B cell (primary cell): ENCODE measurements at regions of chr9 and their contacts with region 1.

Region 1: DNA sequence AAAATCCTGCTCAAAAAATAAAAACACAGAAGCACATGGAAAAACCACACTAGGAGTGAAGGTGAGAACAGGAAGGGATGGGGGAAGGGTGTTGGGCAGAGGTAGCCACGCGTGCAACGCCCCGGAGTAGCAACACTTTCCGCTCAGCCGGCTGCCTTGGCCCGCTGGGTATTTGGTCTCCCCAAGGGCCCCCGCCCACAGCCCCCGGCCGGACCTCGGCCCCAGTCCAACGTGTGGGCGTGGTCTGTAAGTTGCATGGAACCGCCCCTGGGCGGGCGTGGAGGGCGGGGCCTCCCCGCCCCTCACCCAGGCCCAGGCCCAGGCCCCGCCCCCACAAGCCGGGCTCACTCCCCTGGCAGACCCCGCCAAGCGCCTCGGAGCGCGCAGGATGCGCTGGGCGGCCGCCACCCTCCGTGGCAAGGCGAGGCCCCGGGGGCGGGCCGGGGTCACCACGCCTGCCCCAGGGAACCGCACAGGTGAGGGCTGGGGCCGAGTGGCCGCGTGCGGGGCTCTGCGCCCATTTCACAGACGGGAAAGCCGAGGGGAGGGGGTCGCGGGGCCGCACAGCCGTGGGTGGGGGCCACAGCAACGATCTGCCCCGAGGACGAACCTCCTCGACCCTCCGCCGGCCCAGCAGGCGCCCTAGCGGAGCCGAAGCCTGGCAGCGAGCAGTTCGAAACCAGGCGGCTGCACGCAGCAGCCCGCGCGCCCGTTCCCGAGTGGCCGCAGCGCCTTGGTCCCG is at the start of gene SUSD3:
- DNase-seq: peak; percentile 83
- ATAC-seq: peak; percentile 75
- H3K4me3 ChIP-seq: peak within 1 kb of the TSS; percentile 56 to 69 (median 67)
- H3K4me3 Mint-ChIP-seq: peak within 1 kb of the TSS; percentile 90
- H3K27ac ChIP-seq: peak within 1 kb of the TSS; percentile 79 to 80
- H3K27ac Mint-ChIP-seq: peak within 1 kb of the TSS; percentile 99
- H3K4me1 ChIP-seq: peaks cover 50 to 60% of the 10 kb centered on the region in 2 donors
- H3K4me1 Mint-ChIP-seq: peaks cover 66% of the 10 kb centered on the region
- H3K27me3 ChIP-seq: no peaks in the 10 kb centered on the region
- H3K27me3 Mint-ChIP-seq: no peaks in the 10 kb centered on the region
- CTCF ChIP-seq: no peak
- total RNA-seq, gene SUSD3: 38.3 and 41.0 TPM in 2 replicates

Region 2: DNA sequence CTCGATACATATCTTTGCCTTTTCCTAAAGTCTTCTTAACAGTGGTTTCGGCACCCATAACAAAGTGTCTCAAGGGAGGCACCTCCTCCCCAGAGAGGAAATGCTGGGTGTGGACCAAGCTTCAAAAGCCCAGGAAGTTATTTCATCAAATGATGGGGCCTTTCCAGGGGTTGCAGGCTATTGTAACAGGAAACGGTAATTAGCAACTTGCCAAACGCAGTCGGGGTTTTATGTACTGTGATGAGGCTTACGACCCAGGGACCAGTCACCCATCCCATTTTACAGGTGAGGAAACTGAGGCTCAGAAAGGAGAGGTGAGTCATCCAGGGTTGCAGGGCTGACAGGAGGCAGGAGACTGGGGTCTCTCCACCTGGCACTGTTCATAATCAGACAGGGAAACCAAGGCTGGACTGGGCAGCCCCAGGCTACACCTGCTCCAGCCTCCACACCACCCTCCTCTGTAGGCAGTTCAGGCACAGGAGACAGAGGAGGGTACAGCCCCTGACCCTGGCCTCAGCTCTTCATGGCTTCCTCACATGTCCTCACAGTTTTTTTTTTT is 30.0 kb before region 1 on chr9:
- CTCF ChIA-PET with region 1: interaction called, 6 read pairs
- POLR2A ChIA-PET with region 1: interaction called, 27 read pairs
- intact Hi-C with region 1: loop called (anchors 1 kb)
- DNase-seq: peak; percentile 81
- ATAC-seq: peak; percentile 91
- H3K4me3 ChIP-seq: peak overlapping the region in 4 of 5 experiments; percentile 4 to 38 (median 22)
- H3K4me3 Mint-ChIP-seq: peak overlapping the region; percentile 85
- H3K27ac ChIP-seq: peak overlapping the region; percentile 70 to 72
- H3K27ac Mint-ChIP-seq: peak overlapping the region; percentile 95
- H3K4me1 ChIP-seq: peaks cover 33 to 49% of the 10 kb centered on the region in 2 donors
- H3K4me1 Mint-ChIP-seq: peaks cover 61% of the 10 kb centered on the region
- H3K27me3 ChIP-seq: no peaks in the 10 kb centered on the region
- H3K27me3 Mint-ChIP-seq: no peaks in the 10 kb centered on the region
- CTCF ChIP-seq: no peak

Region 3: GRCh38 chr9:93043122-93043521 is 15.4 kb before region 1 on chr9:
- CTCF ChIA-PET with region 1: interaction called, 3 read pairs
- POLR2A ChIA-PET with region 1: interaction called, 10 read pairs
- intact Hi-C with region 1: loop called (anchors 2 kb)
- DNase-seq: peak; percentile 78
- ATAC-seq: peak; percentile 86
- H3K4me3 ChIP-seq: no peak overlapping the region
- H3K4me3 Mint-ChIP-seq: peak overlapping the region; percentile 3
- H3K27ac ChIP-seq: peak overlapping the region in 1 of 2 donors; percentile 22
- H3K27ac Mint-ChIP-seq: peak overlapping the region; percentile 53
- H3K4me1 ChIP-seq: peaks cover 15 to 24% of the 10 kb centered on the region in 2 donors
- H3K4me1 Mint-ChIP-seq: peaks cover 31% of the 10 kb centered on the region
- H3K27me3 ChIP-seq: no peaks in the 10 kb centered on the region
- H3K27me3 Mint-ChIP-seq: no peaks in the 10 kb centered on the region
- CTCF ChIP-seq: no peak

Region 4: DNA sequence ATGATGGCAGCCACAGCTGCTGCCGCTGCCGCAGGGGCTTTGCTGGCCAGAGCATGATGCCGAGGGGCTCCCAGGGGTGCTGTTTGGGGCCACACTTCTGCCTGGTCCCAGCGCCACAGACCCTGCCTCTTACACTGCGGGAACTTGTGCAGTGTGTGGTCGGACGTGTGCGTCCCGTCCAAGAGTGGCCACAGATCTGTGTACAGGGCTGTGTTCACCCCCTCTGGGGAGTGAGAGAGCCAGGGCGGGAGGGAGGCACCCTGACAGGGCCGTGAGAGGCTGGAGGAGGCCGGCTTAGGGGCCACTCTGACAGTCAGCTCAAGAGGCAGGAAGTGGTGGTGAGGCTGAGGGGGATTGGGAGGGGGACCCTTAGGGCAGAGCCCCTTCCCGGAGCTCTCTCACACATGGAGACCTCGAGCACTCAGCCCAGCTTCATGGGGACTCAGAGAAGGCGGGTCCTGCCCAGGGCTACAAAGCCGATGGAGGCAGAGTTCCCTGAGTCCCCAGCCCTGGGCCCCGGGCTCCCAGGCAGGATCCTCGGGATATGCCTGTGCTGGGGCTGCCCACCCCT is 24.4 kb after region 1 on chr9:
- CTCF ChIA-PET with region 1: no interaction called
- POLR2A ChIA-PET with region 1: no interaction called
- intact Hi-C with region 1: no loop called
- DNase-seq: no peak
- ATAC-seq: no peak
- H3K4me3 ChIP-seq: no peak overlapping the region
- H3K4me3 Mint-ChIP-seq: no peak overlapping the region
- H3K27ac ChIP-seq: no peak overlapping the region
- H3K27ac Mint-ChIP-seq: no peak overlapping the region
- H3K4me1 ChIP-seq: no peaks in the 10 kb centered on the region
- H3K4me1 Mint-ChIP-seq: no peaks in the 10 kb centered on the region
- H3K27me3 ChIP-seq: no peaks in the 10 kb centered on the region
- H3K27me3 Mint-ChIP-seq: no peaks in the 10 kb centered on the region
- CTCF ChIP-seq: no peak

Region 5: DNA sequence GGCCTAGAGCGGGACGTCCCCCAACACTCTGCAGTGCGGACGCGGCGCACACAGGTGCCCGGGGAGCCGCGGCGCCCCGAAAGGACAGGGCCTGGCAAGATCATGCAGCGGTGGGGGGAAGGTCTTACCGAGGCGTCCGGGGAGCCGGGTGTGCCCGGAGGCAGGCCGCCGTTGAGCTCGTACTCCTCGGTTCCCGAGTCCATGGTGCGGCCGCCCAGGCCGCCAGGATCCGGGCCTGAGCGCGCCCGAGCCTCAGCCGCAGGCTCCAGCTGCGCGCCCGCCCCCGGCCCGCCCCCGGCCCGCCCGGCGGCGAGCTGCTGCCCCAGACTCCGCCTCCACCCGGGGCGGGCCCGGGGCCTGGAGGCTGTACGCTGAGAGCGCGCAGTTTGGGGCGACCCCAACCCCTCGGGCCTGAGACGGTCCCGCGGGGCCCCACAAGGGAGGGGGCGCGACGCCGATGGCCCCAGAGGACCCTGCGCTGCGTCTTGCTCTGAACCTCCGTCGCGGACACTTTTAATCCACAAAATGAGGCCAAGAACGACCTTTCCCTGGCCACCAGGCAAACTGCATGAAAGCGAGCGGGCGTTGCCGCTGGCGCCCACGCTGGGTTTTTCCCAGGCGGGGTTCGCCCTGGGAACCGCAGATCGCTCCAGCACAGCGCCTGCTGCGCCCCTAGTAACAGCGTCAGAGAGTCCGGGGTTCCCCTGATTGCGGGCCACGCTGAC is 75.7 kb after region 1 on chr9 and contains the start of gene NINJ1:
- CTCF ChIA-PET with region 1: no interaction called
- POLR2A ChIA-PET with region 1: no interaction called
- intact Hi-C with region 1: loop called (anchors 1 kb)
- DNase-seq: peak; percentile 94
- ATAC-seq: peak; percentile 85
- H3K4me3 ChIP-seq: peak within 1 kb of the TSS; percentile 16 to 77 (median 67)
- H3K4me3 Mint-ChIP-seq: peak within 1 kb of the TSS; percentile 90
- H3K27ac ChIP-seq: peak within 1 kb of the TSS; percentile 68 to 76
- H3K27ac Mint-ChIP-seq: peak within 1 kb of the TSS; percentile 84
- H3K4me1 ChIP-seq: peaks cover 25 to 33% of the 10 kb centered on the region in 2 donors
- H3K4me1 Mint-ChIP-seq: peaks cover 43% of the 10 kb centered on the region
- H3K27me3 ChIP-seq: peaks cover 0 to 13% (median 0%) of the 10 kb centered on the region in 4 experiments
- H3K27me3 Mint-ChIP-seq: no peaks in the 10 kb centered on the region
- CTCF ChIP-seq: no peak
- total RNA-seq, gene NINJ1: 7.6 and 8.3 TPM in 2 replicates

Region 6: DNA sequence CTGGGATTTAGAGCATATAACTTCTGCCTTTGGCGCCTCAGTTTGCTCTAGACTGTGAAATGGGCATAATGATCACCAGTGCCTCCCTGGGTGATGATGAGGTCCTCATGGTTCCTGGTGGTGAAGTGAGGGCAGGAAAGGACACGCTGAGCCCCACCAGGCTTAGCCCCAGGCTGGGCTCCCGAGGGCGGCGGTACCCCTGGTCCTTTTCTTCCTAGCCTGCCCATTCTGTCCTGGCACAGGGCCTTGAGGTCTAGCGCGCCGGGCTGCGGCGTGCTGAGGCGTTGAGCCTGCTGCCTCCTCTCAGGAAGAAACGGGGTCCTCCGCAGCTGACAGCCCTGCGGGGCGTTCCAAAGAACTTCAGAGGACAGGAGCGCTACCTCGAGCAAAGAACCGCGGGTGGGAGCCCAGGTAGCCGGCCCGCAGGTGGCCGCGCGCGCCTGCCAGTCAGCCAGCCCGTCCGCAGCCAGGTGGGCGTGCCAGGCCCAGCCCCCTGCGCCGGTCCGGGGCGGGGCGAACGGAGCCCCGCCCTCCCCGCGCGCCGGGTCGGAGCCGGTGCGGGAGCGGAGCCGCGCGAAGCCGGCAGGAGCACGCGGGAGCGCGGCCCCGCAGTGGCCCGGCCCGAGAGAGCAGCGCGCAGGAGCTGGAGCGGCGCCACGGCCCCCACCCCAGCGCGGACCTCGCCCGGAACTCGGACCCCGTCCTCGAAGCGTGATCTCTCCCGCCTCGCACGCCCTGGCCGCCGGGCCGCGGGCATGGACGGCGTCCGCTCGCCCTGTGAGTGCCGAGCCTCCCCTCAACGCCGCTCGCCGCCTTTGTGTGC is 125.3 kb after region 1 on chr9 and contains the start of gene WNK2:
- CTCF ChIA-PET with region 1: no interaction called
- POLR2A ChIA-PET with region 1: no interaction called
- intact Hi-C with region 1: no loop called
- DNase-seq: peak; percentile 63
- ATAC-seq: peak; percentile 85
- H3K4me3 ChIP-seq: peak within 1 kb of the TSS in 4 of 5 experiments; percentile 13 to 60 (median 42)
- H3K4me3 Mint-ChIP-seq: peak within 1 kb of the TSS; percentile 80
- H3K27ac ChIP-seq: no peak within 1 kb of the TSS
- H3K27ac Mint-ChIP-seq: no peak within 1 kb of the TSS
- H3K4me1 ChIP-seq: peaks cover 13 to 20% of the 10 kb centered on the region in 2 donors
- H3K4me1 Mint-ChIP-seq: peaks cover 12% of the 10 kb centered on the region
- H3K27me3 ChIP-seq: peaks cover 0 to 33% (median 24%) of the 10 kb centered on the region in 4 experiments
- H3K27me3 Mint-ChIP-seq: peaks cover 53% of the 10 kb centered on the region
- CTCF ChIP-seq: no peak
- total RNA-seq, gene WNK2: not detected in 2 replicates

Region 7: GRCh38 chr9:93252781-93253530 is 194.4 kb after region 1 on chr9:
- CTCF ChIA-PET with region 1: no interaction called
- POLR2A ChIA-PET with region 1: no interaction called
- intact Hi-C with region 1: no loop called
- DNase-seq: no peak
- ATAC-seq: no peak
- H3K4me3 ChIP-seq: no peak overlapping the region
- H3K4me3 Mint-ChIP-seq: no peak overlapping the region
- H3K27ac ChIP-seq: no peak overlapping the region
- H3K27ac Mint-ChIP-seq: no peak overlapping the region
- H3K4me1 ChIP-seq: no peaks in the 10 kb centered on the region
- H3K4me1 Mint-ChIP-seq: no peaks in the 10 kb centered on the region
- H3K27me3 ChIP-seq: peaks cover 0 to 2% (median 0%) of the 10 kb centered on the region in 4 experiments
- H3K27me3 Mint-ChIP-seq: no peaks in the 10 kb centered on the region
- CTCF ChIP-seq: no peak